ENCODE measurements at regions of chr1 and their contacts with region 1.

Region 1: GRCh38 chr1:184386312-184387068 is at the start of gene C1orf21:
- DNase-seq: peak; percentile 92 to 96
- ATAC-seq: peak; percentile 97
- H3K4me3 ChIP-seq: peak within 1 kb of the TSS; percentile 68 to 99
- H3K27ac ChIP-seq: no peak within 1 kb of the TSS
- H3K4me1 ChIP-seq: peaks cover 0 to 3% of the 10 kb centered on the region in 2 donors
- H3K27me3 ChIP-seq: no peaks in the 10 kb centered on the region
- total RNA-seq, gene C1orf21: 44.0 to 65.7 TPM

Region 2: GRCh38 chr1:184242507-184242943 is 144.0 kb before region 1 on chr1:
- intact Hi-C with region 1: loop called in 1 of 2 experiments (anchors 10 kb)
- DNase-seq: no peak
- ATAC-seq: peak; percentile 50
- H3K4me3 ChIP-seq: no peak overlapping the region
- H3K27ac ChIP-seq: no peak overlapping the region
- H3K4me1 ChIP-seq: no peaks in the 10 kb centered on the region
- H3K27me3 ChIP-seq: no peaks in the 10 kb centered on the region

Region 3: GRCh38 chr1:184296466-184297243 is 89.8 kb before region 1 on chr1:
- intact Hi-C with region 1: loop called in 1 of 2 experiments (anchors 2 kb)
- DNase-seq: peak; percentile 85 to 94
- ATAC-seq: peak; percentile 78
- H3K4me3 ChIP-seq: peak overlapping the region in 1 of 2 donors; percentile 18
- H3K27ac ChIP-seq: peak overlapping the region; percentile 57 to 92
- H3K4me1 ChIP-seq: peaks cover 2 to 5% of the 10 kb centered on the region in 2 donors
- H3K27me3 ChIP-seq: no peaks in the 10 kb centered on the region

Region 4: DNA sequence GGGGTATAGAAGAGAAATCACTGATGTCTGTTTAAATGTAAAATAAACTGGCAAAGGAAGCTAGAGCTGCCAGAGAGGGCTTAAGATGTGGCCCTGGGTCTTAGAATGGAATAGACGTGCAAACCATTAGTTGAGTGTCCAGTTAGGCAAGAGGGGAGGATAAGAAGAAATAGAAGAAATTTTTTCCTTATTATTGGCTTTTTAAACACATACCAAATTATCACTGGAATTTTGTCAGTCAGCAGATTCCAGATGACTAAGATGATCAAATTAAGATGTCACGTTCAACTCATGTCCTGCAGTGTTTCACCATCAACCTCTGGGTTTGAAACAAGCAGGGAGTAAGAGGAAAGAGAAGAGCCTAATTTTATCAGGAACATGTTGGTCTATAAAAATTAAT is 71.2 kb before region 1 on chr1:
- intact Hi-C with region 1: no loop called
- DNase-seq: no peak
- ATAC-seq: no peak
- H3K4me3 ChIP-seq: no peak overlapping the region
- H3K27ac ChIP-seq: no peak overlapping the region
- H3K4me1 ChIP-seq: no peaks in the 10 kb centered on the region
- H3K27me3 ChIP-seq: no peaks in the 10 kb centered on the region

Region 5: GRCh38 chr1:184483101-184483683 is 96.7 kb after region 1 on chr1:
- intact Hi-C with region 1: loop called in 1 of 2 experiments (anchors 10 kb)
- DNase-seq: peak in 1 of 2 donors; percentile 63
- ATAC-seq: peak; percentile 71
- H3K4me3 ChIP-seq: no peak overlapping the region
- H3K27ac ChIP-seq: no peak overlapping the region
- H3K4me1 ChIP-seq: peaks cover 0 to 18% of the 10 kb centered on the region in 2 donors
- H3K27me3 ChIP-seq: no peaks in the 10 kb centered on the region

Region 6: GRCh38 chr1:184507604-184508280 is 121.3 kb after region 1 on chr1:
- intact Hi-C with region 1: loop called in 1 of 2 experiments (anchors 5 kb)
- DNase-seq: no peak
- ATAC-seq: no peak
- H3K4me3 ChIP-seq: no peak overlapping the region
- H3K27ac ChIP-seq: no peak overlapping the region
- H3K4me1 ChIP-seq: peaks cover 3 to 4% of the 10 kb centered on the region in 2 donors
- H3K27me3 ChIP-seq: no peaks in the 10 kb centered on the region

Region 7: GRCh38 chr1:184563308-184563707 is 176.8 kb after region 1 on chr1:
- intact Hi-C with region 1: loop called (anchors 5 kb)
- DNase-seq: no peak
- ATAC-seq: peak; percentile 49
- H3K4me3 ChIP-seq: no peak overlapping the region
- H3K27ac ChIP-seq: no peak overlapping the region
- H3K4me1 ChIP-seq: peaks cover 0 to 11% of the 10 kb centered on the region in 2 donors
- H3K27me3 ChIP-seq: no peaks in the 10 kb centered on the region

Region 8: DNA sequence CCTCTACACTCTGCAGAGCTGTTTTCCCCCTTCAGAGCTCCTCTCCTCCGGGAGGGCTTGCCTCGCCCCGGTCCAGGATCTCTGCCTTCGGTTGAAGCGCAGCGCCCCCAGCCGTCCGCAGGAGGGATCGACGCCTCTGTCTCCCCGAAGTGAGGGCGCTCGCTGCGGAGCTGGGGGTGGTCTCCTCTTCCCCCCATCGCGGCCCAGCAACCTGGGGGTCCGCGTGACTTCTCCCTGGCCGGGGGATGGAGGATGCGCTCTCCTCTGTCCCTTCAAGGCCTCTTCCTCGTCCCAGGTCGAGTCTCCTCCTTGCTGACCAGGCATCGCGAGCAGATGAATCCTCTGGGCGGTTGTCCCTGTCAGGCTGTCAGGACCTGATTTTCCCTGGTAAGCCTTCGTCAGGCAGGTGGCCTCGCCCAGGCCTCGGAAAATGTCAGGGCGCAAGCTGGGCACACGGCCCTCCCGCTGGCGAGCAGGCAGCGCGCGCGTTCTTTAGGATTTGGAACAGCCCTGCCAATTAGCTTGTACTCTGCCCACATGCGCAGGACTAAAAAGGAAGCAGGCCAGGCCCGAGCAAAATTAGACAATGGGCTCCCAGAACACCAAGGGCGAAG is 277.7 kb after region 1 on chr1:
- intact Hi-C with region 1: loop called in 1 of 2 experiments (anchors 5 kb)
- DNase-seq: peak; percentile 85 to 92
- ATAC-seq: peak; percentile 96
- H3K4me3 ChIP-seq: no peak overlapping the region
- H3K27ac ChIP-seq: no peak overlapping the region
- H3K4me1 ChIP-seq: no peaks in the 10 kb centered on the region
- H3K27me3 ChIP-seq: no peaks in the 10 kb centered on the region

Measured in aorta (tissue), 5 donors.